Activated CD8-positive, alpha-beta T cell treated with anti-CD3 and anti-CD28 coated beads for 36 hours (primary cell): ENCODE measurements at regions of chr18 and their contacts with region 1.

Region 1: GRCh38 chr18:27249932-27250331 is 64.8 kb upstream of the CHST9 start:
- DNase-seq: no peak
- ATAC-seq: no peak
- H3K4me3 Mint-ChIP-seq: no peak overlapping the region
- H3K27ac Mint-ChIP-seq: no peak overlapping the region
- H3K4me1 Mint-ChIP-seq: no peaks in the 10 kb centered on the region
- H3K27me3 Mint-ChIP-seq: no peaks in the 10 kb centered on the region
- CTCF ChIP-seq: no peak

Region 2: GRCh38 chr18:27198036-27198435 is 51.9 kb before region 1 on chr18:
- CTCF ChIA-PET with region 1: no interaction called
- POLR2A ChIA-PET with region 1: no interaction called
- intact Hi-C with region 1: loop called (anchors 10 kb)
- DNase-seq: no peak
- ATAC-seq: no peak
- H3K4me3 Mint-ChIP-seq: no peak overlapping the region
- H3K27ac Mint-ChIP-seq: no peak overlapping the region
- H3K4me1 Mint-ChIP-seq: no peaks in the 10 kb centered on the region
- H3K27me3 Mint-ChIP-seq: no peaks in the 10 kb centered on the region
- CTCF ChIP-seq: no peak